Ascending aorta (tissue), 2 donors: ENCODE measurements at regions of chr11 and their contacts with region 1.

Region 1: DNA sequence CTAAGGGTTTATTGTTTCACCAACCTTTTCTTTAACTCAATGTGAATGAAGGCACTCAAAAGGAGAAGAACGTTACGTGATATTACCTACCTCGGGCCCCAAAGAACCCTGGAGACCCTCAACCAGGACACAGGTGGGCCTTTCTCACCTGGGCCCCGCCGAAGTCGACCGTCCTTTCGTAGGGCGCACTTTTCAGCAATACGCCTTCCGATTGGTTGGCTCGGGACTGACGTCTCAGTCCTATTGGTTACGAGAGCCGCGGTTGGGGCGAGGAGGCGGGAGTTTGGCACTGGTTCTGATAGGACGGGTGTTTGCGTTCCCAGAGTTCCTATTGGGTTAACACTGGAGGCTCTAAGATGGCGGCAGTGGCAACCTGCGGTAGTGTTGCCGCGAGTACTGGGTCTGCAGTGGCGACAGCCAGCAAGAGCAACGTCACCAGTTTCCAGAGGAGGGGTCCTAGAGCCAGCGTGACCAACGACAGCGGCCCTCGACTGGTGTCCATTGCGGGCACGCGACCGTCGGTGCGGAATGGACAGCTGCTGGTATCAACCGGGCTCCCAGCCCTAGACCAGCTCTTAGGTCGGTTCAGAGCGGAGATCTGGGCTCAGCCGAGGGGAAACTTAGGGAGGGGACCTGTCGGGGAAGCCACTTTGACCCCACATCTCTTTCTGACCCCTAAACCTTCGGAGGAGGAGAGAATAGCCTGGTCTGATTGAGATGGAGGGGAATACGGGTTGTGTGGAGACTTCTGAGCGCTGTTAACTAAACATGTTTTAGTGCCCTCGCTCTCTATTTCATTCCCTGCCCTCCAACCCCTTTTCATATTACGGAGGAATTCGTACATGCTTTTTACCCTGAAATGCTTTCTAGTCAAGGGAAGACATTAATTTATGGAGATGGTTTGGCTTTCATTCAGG is at the starts of genes ELP4 and IMMP1L:
- DNase-seq: peak; percentile 86 to 98
- H3K4me3 ChIP-seq: peak within 1 kb of the TSS; percentile 56 to 98
- H3K27ac ChIP-seq: peak within 1 kb of the TSS; percentile 65 to 90
- H3K4me1 ChIP-seq: peaks cover 0 to 13% of the 10 kb centered on the region in 2 donors
- H3K27me3 ChIP-seq: no peaks in the 10 kb centered on the region
- CTCF ChIP-seq: no peak
- total RNA-seq, gene ELP4: 37.1 TPM
- total RNA-seq, gene IMMP1L: not detected

Region 2: GRCh38 chr11:31369348-31370329 is 140.0 kb before region 1 on chr11 and contains the starts of genes DCDC1 and DNAJC24:
- intact Hi-C with region 1: loop called (anchors 1 kb)
- DNase-seq: peak; percentile 62 to 92
- H3K4me3 ChIP-seq: peak within 1 kb of the TSS; percentile 74 to 83
- H3K27ac ChIP-seq: peak within 1 kb of the TSS; percentile 66 to 72
- H3K4me1 ChIP-seq: peaks cover 5 to 14% of the 10 kb centered on the region in 2 donors
- H3K27me3 ChIP-seq: no peaks in the 10 kb centered on the region
- CTCF ChIP-seq: no peak
- total RNA-seq, gene DCDC1: not detected
- total RNA-seq, gene DNAJC24: 22.5 TPM

Region 3: GRCh38 chr11:32090545-32091373 is 581.1 kb after region 1 on chr11 and contains the start of gene RCN1:
- intact Hi-C with region 1: loop called (anchors 10 kb)
- DNase-seq: peak in 1 of 2 donors; percentile 76
- H3K4me3 ChIP-seq: peak within 1 kb of the TSS; percentile 91 to 93
- H3K27ac ChIP-seq: peak within 1 kb of the TSS; percentile 89 to 93
- H3K4me1 ChIP-seq: peaks cover 8 to 16% of the 10 kb centered on the region in 2 donors
- H3K27me3 ChIP-seq: no peaks in the 10 kb centered on the region
- CTCF ChIP-seq: no peak
- total RNA-seq, gene RCN1: 85.0 TPM